HEK293 (cell line): ENCODE measurements at regions of chr21 and their contacts with region 1.

Region 1: GRCh38 chr21:41133896-41134522 is 34.0 kb upstream of the BACE2 start:
- H3K4me3 ChIP-seq: no peak overlapping the region
- H3K27ac ChIP-seq: no peak overlapping the region
- H3K4me1 ChIP-seq: no peaks in the 10 kb centered on the region
- CTCF ChIP-seq: peak; percentile 24; the same call in 1 of the 2 replicates

Region 2: GRCh38 chr21:41032541-41032940 is 101.5 kb before region 1 on chr21:
- CTCF ChIA-PET with region 1: no interaction called
- POLR2A ChIA-PET with region 1: no interaction called
- H3K4me3 ChIP-seq: no peak overlapping the region
- H3K27ac ChIP-seq: no peak overlapping the region
- H3K4me1 ChIP-seq: no peaks in the 10 kb centered on the region
- CTCF ChIP-seq: no peak

Region 3: GRCh38 chr21:41121785-41122421 is 12.1 kb before region 1 on chr21:
- CTCF ChIA-PET with region 1: interaction called, 101 read pairs
- POLR2A ChIA-PET with region 1: no interaction called
- H3K4me3 ChIP-seq: no peak overlapping the region
- H3K27ac ChIP-seq: no peak overlapping the region
- H3K4me1 ChIP-seq: no peaks in the 10 kb centered on the region
- CTCF ChIP-seq: peak; percentile 76; the same call in 1 of the 2 replicates

Region 4: GRCh38 chr21:41147436-41148355 is 13.7 kb after region 1 on chr21:
- CTCF ChIA-PET with region 1: interaction called, 38 read pairs
- POLR2A ChIA-PET with region 1: no interaction called
- H3K4me3 ChIP-seq: no peak overlapping the region
- H3K27ac ChIP-seq: no peak overlapping the region
- H3K4me1 ChIP-seq: no peaks in the 10 kb centered on the region
- CTCF ChIP-seq: no peak

Region 5: GRCh38 chr21:41304068-41304720 is 170.2 kb after region 1 on chr21:
- CTCF ChIA-PET with region 1: no interaction called
- POLR2A ChIA-PET with region 1: no interaction called
- H3K4me3 ChIP-seq: no peak overlapping the region
- H3K27ac ChIP-seq: no peak overlapping the region
- H3K4me1 ChIP-seq: no peaks in the 10 kb centered on the region
- CTCF ChIP-seq: no peak